ENCODE measurements at regions of chr2 and their contacts with region 1.

Region 1: GRCh38 chr2:70871398-70872211 is 36.0 kb upstream of the CD207 start:
- DNase-seq: peak; percentile 74
- ATAC-seq: peak; percentile 98
- H3K4me3 ChIP-seq: peak overlapping the region in 1 of 3 experiments; percentile 45; a peak in 1 of 6 replicates
- H3K27ac ChIP-seq: no peak overlapping the region
- H3K4me1 ChIP-seq: peaks cover 10% of the 10 kb centered on the region
- H3K27me3 ChIP-seq: no peaks in the 10 kb centered on the region; a peak in 1 of 5 replicates
- CTCF ChIP-seq: peak; percentile 100
- EP300 ChIP-seq: no peak
- POLR2A ChIP-seq: no peak
- RAD21 ChIP-seq: peak; percentile 99

Region 2: DNA sequence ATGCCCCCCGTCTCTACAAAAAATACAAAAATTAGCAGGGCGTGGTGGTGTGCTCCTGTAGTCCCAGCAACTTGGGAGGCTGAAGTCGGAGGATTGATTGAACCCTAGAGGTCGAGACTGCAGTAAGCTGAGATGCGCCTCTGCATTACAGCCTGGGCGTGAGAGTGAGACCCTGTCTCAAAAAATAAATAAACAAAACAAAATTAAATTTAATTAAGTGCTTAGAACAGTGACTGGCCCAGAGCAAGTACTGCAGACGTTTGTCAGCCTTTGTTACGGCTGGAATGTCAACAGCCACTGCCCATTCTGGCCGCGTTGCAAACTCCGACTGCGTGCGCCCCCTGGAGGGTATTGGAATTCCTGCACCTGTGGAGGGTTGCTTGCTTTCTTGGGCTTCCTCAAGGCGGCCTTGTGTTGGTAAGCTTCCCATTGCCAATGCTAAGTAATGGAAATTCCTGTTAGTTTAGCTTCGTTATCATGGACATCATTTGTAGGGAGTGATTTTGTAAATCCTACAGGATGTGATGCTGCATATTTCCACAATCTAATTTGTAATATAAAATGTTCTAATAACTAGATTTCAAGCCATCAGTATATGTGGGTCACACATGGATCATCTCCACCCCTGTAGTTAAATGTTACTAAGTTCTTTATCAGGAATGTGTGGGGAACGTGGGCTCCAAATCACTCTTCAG is 48.2 kb after region 1 on chr2:
- CTCF ChIA-PET with region 1: interaction called, 124 read pairs
- POLR2A ChIA-PET with region 1: no interaction called
- in situ Hi-C with region 1: loop called (anchors 5 kb)
- intact Hi-C with region 1: loop called (anchors 1 kb)
- DNase-seq: peak; percentile 80
- ATAC-seq: peak; percentile 88
- H3K4me3 ChIP-seq: no peak overlapping the region
- H3K27ac ChIP-seq: no peak overlapping the region
- H3K4me1 ChIP-seq: peaks cover 22% of the 10 kb centered on the region
- H3K27me3 ChIP-seq: no peaks in the 10 kb centered on the region
- CTCF ChIP-seq: peak; percentile 97
- EP300 ChIP-seq: no peak
- POLR2A ChIP-seq: no peak
- RAD21 ChIP-seq: peak; percentile 95

Region 3: DNA sequence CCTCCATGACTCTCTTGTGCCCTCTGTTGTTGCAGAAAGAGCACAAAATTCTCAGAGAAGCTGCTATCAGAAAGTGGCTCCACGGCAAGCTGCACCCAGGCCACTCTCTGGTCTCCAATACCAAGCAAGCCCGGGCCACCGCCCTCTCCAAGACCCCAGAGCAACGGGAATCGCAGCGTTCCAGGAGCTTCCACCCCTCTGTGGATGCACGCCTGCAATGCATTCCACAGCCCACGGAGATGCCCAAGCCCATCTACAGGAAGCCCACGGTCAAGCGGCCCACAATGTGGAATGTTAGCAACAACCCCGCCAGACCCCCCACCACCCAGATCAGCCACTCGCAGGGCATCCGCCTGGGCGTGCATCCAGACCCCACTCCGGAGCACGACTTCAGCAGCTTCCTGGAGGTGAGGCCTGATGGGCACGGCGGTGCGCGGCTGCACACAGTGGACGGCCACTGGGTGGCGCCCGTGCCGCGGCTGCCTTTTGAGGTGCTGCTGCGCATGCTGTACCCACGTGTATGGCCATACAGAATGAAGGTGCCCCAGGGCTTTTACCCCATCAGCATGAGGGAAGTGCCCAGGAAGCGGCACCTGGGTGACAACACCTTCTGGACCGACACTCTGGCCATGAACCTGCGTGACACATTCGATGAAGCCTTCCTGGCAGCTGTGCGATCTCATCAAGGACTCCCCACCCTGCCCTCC is 113.1 kb after region 1 on chr2:
- CTCF ChIA-PET with region 1: no interaction called
- POLR2A ChIA-PET with region 1: no interaction called
- in situ Hi-C with region 1: no loop called
- intact Hi-C with region 1: no loop called
- DNase-seq: no peak
- ATAC-seq: peak; percentile 75
- H3K4me3 ChIP-seq: no peak overlapping the region
- H3K27ac ChIP-seq: no peak overlapping the region
- H3K4me1 ChIP-seq: no peaks in the 10 kb centered on the region
- H3K27me3 ChIP-seq: no peaks in the 10 kb centered on the region
- CTCF ChIP-seq: peak; percentile 68
- EP300 ChIP-seq: no peak
- POLR2A ChIP-seq: no peak
- RAD21 ChIP-seq: 0 out of 2 replicates have a peak, but pooled peaks have one; percentile 45